Heart left ventricle (tissue), 16 donors: ENCODE measurements at regions of chr6 and their contacts with region 1.

Region 1: DNA sequence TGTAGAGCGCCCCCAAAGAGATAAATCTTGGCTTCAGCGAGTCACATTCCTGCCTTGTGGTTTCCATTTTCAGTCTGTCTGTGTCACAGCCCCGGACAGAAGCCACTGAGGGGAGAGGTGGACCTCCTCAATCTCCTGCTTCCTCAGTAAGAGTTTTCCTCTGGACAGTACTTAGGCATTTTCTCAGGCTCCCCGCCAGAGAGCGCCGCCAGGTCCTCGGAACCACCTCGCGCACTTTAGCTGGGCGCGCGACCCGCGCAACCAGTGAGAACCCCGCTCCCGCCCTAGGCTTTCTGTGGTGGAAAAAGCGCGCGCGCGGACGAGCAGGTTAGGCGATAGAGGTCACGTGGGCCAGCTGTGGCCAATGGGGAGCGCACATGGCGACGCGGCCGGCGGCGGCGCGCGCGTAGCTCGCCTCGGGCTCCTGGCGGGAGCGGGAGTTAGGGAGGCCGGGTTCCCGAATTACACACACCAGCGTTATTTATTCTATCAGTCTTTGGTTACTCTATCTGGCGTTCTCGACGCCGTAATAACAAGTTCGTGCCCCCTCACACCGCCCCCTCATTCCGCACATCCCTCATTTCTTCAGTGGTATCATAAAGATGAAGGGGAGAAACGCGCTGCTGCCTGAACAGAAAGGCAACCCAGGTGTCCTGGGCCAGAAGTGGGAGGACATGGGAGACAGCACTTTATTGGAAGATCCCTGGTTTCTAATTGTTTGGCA is 19.4 kb downstream of the PXT1 start:
- DNase-seq: peak; percentile 99
- ATAC-seq: peak; percentile 100
- H3K4me3 ChIP-seq: peak overlapping the region in 11 of 12 donors; percentile 35 to 67 (median 56)
- H3K27ac ChIP-seq: peak overlapping the region in 11 of 12 donors; percentile 55 to 87 (median 71)
- H3K4me1 ChIP-seq: peaks cover 0 to 13% (median 6%) of the 10 kb centered on the region in 12 donors
- H3K27me3 ChIP-seq: no peaks in the 10 kb centered on the region
- CTCF ChIP-seq: peak; percentile 45 to 87 (median 64)
- POLR2A ChIP-seq: peak in 1 of 2 donors; percentile 71

Region 2: GRCh38 chr6:36442671-36443470 is 19.6 kb after region 1 on chr6 and contains the starts of genes KCTD20 and PXT1:
- intact Hi-C with region 1: loop called in 5 of 10 experiments (anchors 1 to 2 kb)
- DNase-seq: peak; percentile 90 to 95 (median 93)
- ATAC-seq: peak; percentile 87 to 94 (median 91)
- H3K4me3 ChIP-seq: peak within 1 kb of the TSS; percentile 78 to 99 (median 89)
- H3K27ac ChIP-seq: peak within 1 kb of the TSS; percentile 85 to 100 (median 98)
- H3K4me1 ChIP-seq: peaks cover 8 to 48% (median 34%) of the 10 kb centered on the region in 12 donors
- H3K27me3 ChIP-seq: no peaks in the 10 kb centered on the region
- CTCF ChIP-seq: no peak
- POLR2A ChIP-seq: peak in 1 of 2 donors; percentile 70
- total RNA-seq, gene KCTD20: 25.0 to 43.9 (median 29.0) TPM
- total RNA-seq, gene PXT1: 0.21 to 0.59 (median 0.40) TPM in 4 of 9 donors, not detected in the others

Region 3: GRCh38 chr6:36504982-36505381 is 81.7 kb after region 1 on chr6:
- intact Hi-C with region 1: no loop called
- DNase-seq: no peak
- ATAC-seq: peak in 1 of 4 donors; percentile 34
- H3K4me3 ChIP-seq: no peak overlapping the region
- H3K27ac ChIP-seq: no peak overlapping the region
- H3K4me1 ChIP-seq: peaks cover 0 to 10% (median 0%) of the 10 kb centered on the region in 12 donors
- H3K27me3 ChIP-seq: no peaks in the 10 kb centered on the region
- CTCF ChIP-seq: no peak
- POLR2A ChIP-seq: no peak

Region 4: DNA sequence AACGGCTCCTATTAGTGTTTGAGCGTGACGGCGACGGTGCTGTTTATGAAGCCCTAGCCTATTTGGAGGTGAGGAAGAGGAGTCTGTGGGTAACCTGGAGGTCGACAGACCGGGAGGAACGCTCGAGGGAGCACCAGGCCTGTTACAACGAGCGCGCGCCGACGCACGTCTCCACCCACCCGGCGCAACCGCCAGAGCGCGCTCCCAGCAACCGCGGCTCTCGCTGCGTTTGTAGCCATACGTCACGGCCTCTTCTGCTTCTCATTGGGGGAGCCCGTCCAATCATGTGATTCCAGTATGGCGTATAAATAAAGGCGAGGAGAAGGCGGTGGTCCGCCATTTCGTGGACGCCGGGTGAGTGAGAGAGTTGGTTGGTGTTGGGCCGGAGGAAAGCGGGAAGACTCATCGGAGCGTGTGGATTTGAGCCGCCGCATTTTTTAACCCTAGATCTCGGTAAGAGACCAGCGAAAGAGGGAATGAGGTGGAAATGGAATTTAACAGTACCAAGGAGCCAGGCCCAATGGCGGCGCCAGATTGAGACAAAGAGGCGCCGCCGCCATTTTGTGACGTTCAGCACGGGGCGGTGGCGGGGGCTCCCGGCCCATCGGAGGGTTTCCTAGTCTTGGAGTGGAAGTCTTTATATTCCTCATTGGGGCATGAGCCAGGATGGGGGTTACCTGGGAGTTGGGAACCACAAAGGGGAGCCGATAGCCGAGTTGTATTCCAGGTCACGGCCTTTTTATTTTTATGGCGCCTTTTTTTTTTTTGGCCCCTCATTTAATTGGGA is 171.0 kb after region 1 on chr6 and contains the start of gene SRSF3:
- intact Hi-C with region 1: loop called in 2 of 10 experiments (anchors 2 to 10 kb)
- DNase-seq: peak; percentile 97 to 98 (median 98)
- ATAC-seq: peak; percentile 96 to 99 (median 97)
- H3K4me3 ChIP-seq: peak within 1 kb of the TSS; percentile 64 to 83 (median 74)
- H3K27ac ChIP-seq: peak within 1 kb of the TSS; percentile 87 to 100 (median 97)
- H3K4me1 ChIP-seq: peaks cover 4 to 41% (median 30%) of the 10 kb centered on the region in 12 donors
- H3K27me3 ChIP-seq: no peaks in the 10 kb centered on the region
- CTCF ChIP-seq: peak; percentile 43 to 85 (median 55)
- POLR2A ChIP-seq: peak in 1 of 2 donors; percentile 95
- total RNA-seq, gene SRSF3: 43.2 to 162 (median 111) TPM

Region 5: DNA sequence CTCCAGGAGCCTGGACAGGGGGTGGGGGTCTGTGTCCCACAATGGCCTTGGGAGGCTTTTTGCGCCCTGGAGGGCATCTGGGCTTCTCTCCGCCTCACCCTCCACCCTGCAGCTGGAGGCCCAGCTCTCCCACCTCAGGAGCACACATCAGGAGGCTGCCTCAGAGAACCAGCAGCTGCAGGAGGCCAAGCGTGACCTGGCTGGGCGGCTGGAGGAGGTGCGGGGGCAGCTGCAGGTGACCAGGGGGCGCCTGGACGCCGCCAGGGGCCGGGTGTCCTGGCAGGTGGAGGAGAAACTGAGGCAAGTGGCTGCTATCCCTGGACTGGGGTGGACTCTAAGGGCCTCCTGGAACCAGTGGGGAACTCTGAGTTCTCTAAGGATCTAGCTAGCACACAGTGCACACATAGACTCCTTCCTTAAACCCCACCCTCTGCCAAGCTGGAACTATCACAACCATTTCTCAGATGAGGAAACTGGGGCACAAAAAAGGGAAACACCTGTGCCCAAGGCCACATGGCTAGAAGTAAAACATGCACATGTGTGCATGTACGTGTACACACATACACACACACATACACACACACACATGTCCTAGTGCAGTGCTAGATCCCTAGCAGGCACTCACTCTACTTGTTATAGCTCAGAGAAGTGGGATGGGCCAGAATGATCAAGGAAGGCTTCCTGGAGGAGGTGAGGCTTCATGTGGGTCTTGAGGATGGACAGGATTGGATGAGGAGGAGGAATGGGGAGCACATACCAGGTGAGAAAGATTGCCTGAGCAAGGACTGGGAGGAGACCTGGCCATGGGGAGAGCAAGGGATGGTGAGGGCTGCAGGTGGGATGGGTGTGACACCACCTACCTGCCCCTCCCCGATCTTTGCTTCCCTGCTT is 297.2 kb after region 1 on chr6:
- intact Hi-C with region 1: no loop called
- DNase-seq: peak in 1 of 5 donors; percentile 55
- ATAC-seq: no peak
- H3K4me3 ChIP-seq: no peak overlapping the region
- H3K27ac ChIP-seq: no peak overlapping the region
- H3K4me1 ChIP-seq: no peaks in the 10 kb centered on the region
- H3K27me3 ChIP-seq: no peaks in the 10 kb centered on the region
- CTCF ChIP-seq: no peak
- POLR2A ChIP-seq: no peak

Region 6: GRCh38 chr6:36759148-36759759 is 336.0 kb after region 1 on chr6:
- intact Hi-C with region 1: loop called in 6 of 10 experiments (anchors 1 to 10 kb)
- DNase-seq: peak; percentile 78 to 92 (median 82)
- ATAC-seq: peak; percentile 62 to 83 (median 80)
- H3K4me3 ChIP-seq: no peak overlapping the region
- H3K27ac ChIP-seq: no peak overlapping the region
- H3K4me1 ChIP-seq: peaks cover 0 to 45% (median 5%) of the 10 kb centered on the region in 12 donors
- H3K27me3 ChIP-seq: no peaks in the 10 kb centered on the region
- CTCF ChIP-seq: peak; percentile 94 to 99 (median 97)
- POLR2A ChIP-seq: no peak